H1 (cell line): ENCODE measurements at regions of chr10 and their contacts with region 1.

Region 1: GRCh38 chr10:9331583-9332008 is 1277.1 kb downstream of the GATA3 start:
- DNase-seq: no peak
- H3K4me3 ChIP-seq: no peak overlapping the region
- H3K27ac ChIP-seq: no peak overlapping the region
- H3K4me1 ChIP-seq: no peaks in the 10 kb centered on the region
- H3K27me3 ChIP-seq: no peaks in the 10 kb centered on the region
- CTCF ChIP-seq: peak in 2 of 3 experiments; percentile 36 to 52; a peak in 2 of 4 replicates
- EP300 ChIP-seq: no peak
- POLR2A ChIP-seq: no peak
- RAD21 ChIP-seq: peak; percentile 76 to 79

Region 2: DNA sequence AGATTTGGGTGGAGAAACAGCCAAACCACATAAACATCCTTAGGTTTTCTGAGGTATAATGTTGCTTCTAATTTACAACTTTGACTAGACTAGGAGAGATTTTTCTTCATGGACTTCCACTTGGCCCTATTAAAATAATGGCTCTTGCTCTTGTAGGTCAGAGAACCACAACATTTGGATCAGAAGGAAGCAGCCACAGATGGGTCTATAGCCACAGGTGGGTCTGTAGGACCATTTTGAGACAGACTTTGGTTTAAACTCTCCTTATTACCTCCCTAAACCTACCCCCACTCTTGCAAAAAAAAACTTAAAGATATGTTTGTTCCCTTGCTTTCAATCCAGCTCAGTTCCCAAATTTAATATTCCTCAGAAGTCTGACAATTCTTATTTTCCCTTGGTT is 16.3 kb before region 1 on chr10:
- CTCF ChIA-PET with region 1: interaction called, 11 read pairs
- POLR2A ChIA-PET with region 1: no interaction called
- DNase-seq: no peak
- H3K4me3 ChIP-seq: no peak overlapping the region
- H3K27ac ChIP-seq: no peak overlapping the region
- H3K4me1 ChIP-seq: peaks cover 0 to 3% (median 2%) of the 10 kb centered on the region in 4 experiments; a peak in 2 of 7 replicates
- H3K27me3 ChIP-seq: no peaks in the 10 kb centered on the region
- CTCF ChIP-seq: no peak
- EP300 ChIP-seq: no peak
- POLR2A ChIP-seq: no peak
- RAD21 ChIP-seq: no peak

Region 3: GRCh38 chr10:9342885-9343570 is 11.4 kb after region 1 on chr10:
- CTCF ChIA-PET with region 1: interaction called, 13 read pairs
- POLR2A ChIA-PET with region 1: no interaction called
- DNase-seq: no peak
- H3K4me3 ChIP-seq: no peak overlapping the region
- H3K27ac ChIP-seq: no peak overlapping the region
- H3K4me1 ChIP-seq: no peaks in the 10 kb centered on the region
- H3K27me3 ChIP-seq: no peaks in the 10 kb centered on the region
- CTCF ChIP-seq: peak in 2 of 3 experiments; percentile 51 to 75; a peak in 3 of 4 replicates
- EP300 ChIP-seq: no peak
- POLR2A ChIP-seq: no peak
- RAD21 ChIP-seq: peak; percentile 89 to 90

Region 4: DNA sequence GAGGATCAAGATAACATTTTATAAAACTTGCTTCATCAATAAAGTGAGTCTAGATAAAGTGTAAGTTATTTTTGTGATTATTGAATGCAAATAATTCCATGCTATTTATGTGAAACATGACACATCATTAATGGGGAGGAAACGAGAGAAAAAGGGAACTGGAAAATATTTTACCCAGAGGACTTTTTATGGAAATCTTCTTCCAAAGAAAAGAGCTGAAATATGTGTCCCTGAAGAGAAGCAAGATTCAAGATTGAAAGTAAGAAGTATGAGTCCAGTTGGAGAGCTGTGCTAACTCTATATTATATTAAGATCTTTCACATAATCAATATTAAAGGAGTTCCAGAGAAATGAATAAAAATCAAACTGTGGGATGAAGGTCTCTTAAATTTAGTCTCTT is 84.7 kb after region 1 on chr10:
- CTCF ChIA-PET with region 1: no interaction called
- POLR2A ChIA-PET with region 1: no interaction called
- DNase-seq: no peak
- H3K4me3 ChIP-seq: no peak overlapping the region
- H3K27ac ChIP-seq: no peak overlapping the region
- H3K4me1 ChIP-seq: no peaks in the 10 kb centered on the region
- H3K27me3 ChIP-seq: no peaks in the 10 kb centered on the region
- CTCF ChIP-seq: no peak
- EP300 ChIP-seq: no peak
- POLR2A ChIP-seq: no peak
- RAD21 ChIP-seq: no peak